ENCODE measurements at regions of chr1 and their contacts with region 1.

Region 1: GRCh38 chr1:185345913-185346720 is 29.1 kb upstream of the IVNS1ABP start:
- DNase-seq: no peak
- ATAC-seq: no peak
- H3K4me3 ChIP-seq: no peak overlapping the region
- H3K27ac ChIP-seq: no peak overlapping the region
- H3K4me1 ChIP-seq: no peaks in the 10 kb centered on the region
- H3K27me3 ChIP-seq: no peaks in the 10 kb centered on the region
- CTCF ChIP-seq: no peak
- POLR2A ChIP-seq: no peak
- RAD21 ChIP-seq: no peak

Region 2: DNA sequence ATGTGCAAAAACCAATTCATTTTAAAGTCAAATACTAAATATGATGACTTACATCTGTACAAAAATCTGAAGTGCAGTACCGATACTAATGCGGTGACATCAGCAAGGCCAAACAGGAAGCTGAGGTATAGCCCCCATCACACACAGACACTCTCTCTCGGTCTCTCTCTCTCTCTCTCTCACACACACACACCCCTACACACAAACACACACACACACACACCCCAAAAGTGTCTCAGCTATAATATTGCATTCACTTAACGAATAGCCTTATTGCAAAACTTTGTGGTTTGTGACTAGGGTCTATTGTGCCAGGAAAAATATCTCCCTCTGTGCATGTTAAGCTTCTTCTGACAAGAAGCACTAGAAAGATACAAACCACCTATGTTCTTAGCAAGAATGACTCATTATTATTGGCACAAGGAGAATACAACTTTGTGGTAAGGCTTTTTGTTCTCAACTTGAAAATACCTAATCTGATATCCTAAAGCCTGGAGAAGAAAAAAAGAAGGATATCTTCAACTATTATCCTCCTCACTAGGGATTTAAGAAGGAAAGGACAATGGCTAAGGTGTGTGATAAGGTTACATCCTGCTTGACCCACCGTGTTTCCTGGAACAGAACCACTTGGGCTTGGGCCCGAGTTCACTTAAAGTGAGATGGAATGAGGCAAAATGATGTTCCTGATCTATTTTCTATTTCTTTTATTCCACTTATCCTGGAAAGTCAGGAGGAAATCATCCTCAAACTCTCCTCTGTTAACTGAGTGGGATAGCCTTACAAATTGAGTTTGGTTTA is 478.9 kb before region 1 on chr1:
- CTCF ChIA-PET with region 1: no interaction called
- POLR2A ChIA-PET with region 1: no interaction called
- dilution Hi-C with region 1: no loop called
- in situ Hi-C with region 1: no loop called
- intact Hi-C with region 1: no loop called
- DNase-seq: peak; percentile 96
- ATAC-seq: peak; percentile 85
- H3K4me3 ChIP-seq: no peak overlapping the region
- H3K27ac ChIP-seq: peak overlapping the region; percentile 75; the same call in 1 of the 2 replicates
- H3K4me1 ChIP-seq: peaks cover 5% of the 10 kb centered on the region
- H3K27me3 ChIP-seq: no peaks in the 10 kb centered on the region
- CTCF ChIP-seq: no peak
- POLR2A ChIP-seq: no peak
- RAD21 ChIP-seq: no peak

Region 3: DNA sequence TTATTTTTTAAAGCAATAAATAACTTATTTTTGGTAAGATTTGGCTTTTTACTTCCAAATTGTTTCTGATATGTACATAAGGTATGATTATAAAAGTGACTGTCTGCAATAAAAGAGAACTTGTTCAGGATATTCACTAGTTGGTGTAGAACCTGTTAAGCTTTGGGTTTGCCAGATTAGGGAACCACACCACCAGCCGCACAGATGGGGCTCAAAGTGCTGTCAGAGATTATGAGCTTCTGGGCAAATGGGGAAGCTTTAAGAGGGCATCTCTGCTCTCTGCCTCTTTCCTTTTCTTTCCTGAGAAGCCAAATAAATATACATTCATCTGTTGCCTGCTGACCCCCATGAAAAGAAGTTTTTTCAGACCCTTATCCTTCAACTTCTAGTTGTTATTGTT is 54.5 kb before region 1 on chr1:
- CTCF ChIA-PET with region 1: no interaction called
- POLR2A ChIA-PET with region 1: no interaction called
- dilution Hi-C with region 1: no loop called
- in situ Hi-C with region 1: no loop called
- intact Hi-C with region 1: no loop called
- DNase-seq: no peak
- ATAC-seq: no peak
- H3K4me3 ChIP-seq: no peak overlapping the region
- H3K27ac ChIP-seq: no peak overlapping the region
- H3K4me1 ChIP-seq: no peaks in the 10 kb centered on the region
- H3K27me3 ChIP-seq: no peaks in the 10 kb centered on the region
- CTCF ChIP-seq: no peak
- POLR2A ChIP-seq: no peak
- RAD21 ChIP-seq: no peak

Region 4: DNA sequence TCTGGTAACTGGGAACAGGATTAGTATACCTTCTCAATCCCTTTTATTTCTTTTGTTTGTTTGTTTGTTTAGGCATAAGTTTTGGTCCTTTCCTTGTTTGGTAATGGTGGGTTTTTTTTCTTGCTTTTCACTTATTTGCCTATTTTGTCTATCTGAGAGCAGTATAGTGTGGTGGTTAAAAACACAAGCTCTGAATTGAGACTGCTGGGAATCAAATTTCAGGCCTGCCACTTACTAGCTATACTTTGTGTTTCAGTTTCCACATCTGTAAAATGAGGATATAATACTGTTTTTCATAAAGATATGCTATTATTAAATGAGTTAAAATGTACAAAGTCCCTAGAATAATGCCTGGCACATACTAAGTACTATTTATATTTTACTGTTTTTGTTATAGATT is 52.5 kb after region 1 on chr1:
- CTCF ChIA-PET with region 1: no interaction called
- POLR2A ChIA-PET with region 1: no interaction called
- dilution Hi-C with region 1: no loop called
- in situ Hi-C with region 1: no loop called
- intact Hi-C with region 1: loop called (anchors 10 kb)
- DNase-seq: no peak
- ATAC-seq: no peak
- H3K4me3 ChIP-seq: no peak overlapping the region
- H3K27ac ChIP-seq: no peak overlapping the region
- H3K4me1 ChIP-seq: peaks cover 1% of the 10 kb centered on the region; the same call in 1 of the 2 replicates
- H3K27me3 ChIP-seq: no peaks in the 10 kb centered on the region
- CTCF ChIP-seq: no peak
- POLR2A ChIP-seq: no peak
- RAD21 ChIP-seq: no peak

Region 5: GRCh38 chr1:186155594-186155993 is 809.5 kb after region 1 on chr1:
- CTCF ChIA-PET with region 1: no interaction called
- POLR2A ChIA-PET with region 1: no interaction called
- dilution Hi-C with region 1: no loop called
- in situ Hi-C with region 1: no loop called
- intact Hi-C with region 1: no loop called
- DNase-seq: peak; percentile 80
- ATAC-seq: peak; percentile 86
- H3K4me3 ChIP-seq: no peak overlapping the region
- H3K27ac ChIP-seq: no peak overlapping the region
- H3K4me1 ChIP-seq: peaks cover 4% of the 10 kb centered on the region; the same call in 1 of the 2 replicates
- H3K27me3 ChIP-seq: no peaks in the 10 kb centered on the region
- CTCF ChIP-seq: peak; percentile 74
- POLR2A ChIP-seq: no peak
- RAD21 ChIP-seq: peak; percentile 73